ENCODE measurements at regions of chr3 and their contacts with region 1.

Region 1: GRCh38 chr3:153161138-153161713 is 800 bp upstream of the RAP2B start:
- DNase-seq: peak; percentile 66 to 95 (median 93)
- ATAC-seq: peak; percentile 85
- H3K4me3 ChIP-seq: peak overlapping the region; percentile 97
- H3K4me3 Mint-ChIP-seq: peak overlapping the region; percentile 95 to 100 (median 98)
- H3K27ac ChIP-seq: peak overlapping the region; percentile 81
- H3K27ac Mint-ChIP-seq: peak overlapping the region; percentile 89 to 98 (median 92)
- H3K4me1 ChIP-seq: peaks cover 7 to 22% of the 10 kb centered on the region in 2 donors
- H3K4me1 Mint-ChIP-seq: peaks cover 28 to 40% (median 34%) of the 10 kb centered on the region in 7 donors
- H3K27me3 ChIP-seq: no peaks in the 10 kb centered on the region
- H3K27me3 Mint-ChIP-seq: no peaks in the 10 kb centered on the region

Region 2: DNA sequence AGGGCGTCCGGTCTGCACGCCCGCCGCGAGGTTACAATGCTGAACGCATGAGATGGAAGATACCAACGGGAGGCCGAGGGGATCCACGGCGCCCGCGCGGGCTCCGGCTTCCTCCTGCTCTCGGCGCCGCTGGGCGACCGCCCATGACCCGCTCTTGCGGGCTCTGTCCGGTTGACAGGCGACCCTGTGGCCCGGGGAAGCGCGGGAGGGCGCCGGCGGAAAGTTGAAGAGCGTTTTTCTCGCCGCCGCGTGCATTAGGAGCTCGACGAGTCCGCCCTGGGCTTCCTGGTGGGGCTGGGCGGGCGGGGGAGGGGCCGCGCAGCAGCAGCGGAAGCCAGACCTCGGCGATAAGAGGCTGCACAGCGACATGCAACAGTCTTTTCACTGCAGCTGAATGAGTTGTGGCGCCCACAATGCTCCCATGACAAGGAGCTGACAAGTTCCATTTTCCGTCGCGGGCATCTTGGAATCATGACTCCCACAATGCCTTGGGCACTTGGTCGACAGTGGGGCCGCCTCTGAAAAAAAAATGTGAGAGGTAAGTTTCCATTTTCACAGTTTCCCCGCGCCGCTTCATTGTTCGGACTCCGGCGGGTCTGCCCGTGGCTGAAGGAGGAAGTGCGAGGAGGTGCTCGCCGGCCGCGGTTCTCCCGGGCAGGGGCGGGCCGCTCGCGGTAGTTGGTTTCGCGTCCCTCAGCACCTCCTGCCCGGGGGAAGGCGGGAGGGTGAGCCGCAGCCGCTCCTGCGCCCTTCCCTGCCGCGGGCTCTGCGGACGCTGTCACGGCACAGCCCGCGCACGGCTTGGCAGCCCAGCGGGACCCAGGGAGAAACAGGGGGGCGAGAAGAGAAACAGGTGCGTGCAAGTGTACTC is 892.4 kb before region 1 on chr3 and contains the start of gene MBNL1:
- CTCF ChIA-PET with region 1: no interaction called
- POLR2A ChIA-PET with region 1: no interaction called
- intact Hi-C with region 1: loop called in 1 of 2 experiments (anchors 10 kb)
- DNase-seq: peak; percentile 65 to 89 (median 87)
- ATAC-seq: peak; percentile 77
- H3K4me3 ChIP-seq: peak within 1 kb of the TSS; percentile 77
- H3K4me3 Mint-ChIP-seq: peak within 1 kb of the TSS; percentile 78 to 100 (median 94)
- H3K27ac ChIP-seq: peak within 1 kb of the TSS; percentile 99
- H3K27ac Mint-ChIP-seq: peak within 1 kb of the TSS; percentile 88 to 98 (median 95)
- H3K4me1 ChIP-seq: peaks cover 34 to 46% of the 10 kb centered on the region in 2 donors
- H3K4me1 Mint-ChIP-seq: peaks cover 46 to 69% (median 64%) of the 10 kb centered on the region in 7 donors
- H3K27me3 ChIP-seq: no peaks in the 10 kb centered on the region
- H3K27me3 Mint-ChIP-seq: no peaks in the 10 kb centered on the region
- total RNA-seq, gene MBNL1: 459 to 675 (median 508) TPM

Region 3: DNA sequence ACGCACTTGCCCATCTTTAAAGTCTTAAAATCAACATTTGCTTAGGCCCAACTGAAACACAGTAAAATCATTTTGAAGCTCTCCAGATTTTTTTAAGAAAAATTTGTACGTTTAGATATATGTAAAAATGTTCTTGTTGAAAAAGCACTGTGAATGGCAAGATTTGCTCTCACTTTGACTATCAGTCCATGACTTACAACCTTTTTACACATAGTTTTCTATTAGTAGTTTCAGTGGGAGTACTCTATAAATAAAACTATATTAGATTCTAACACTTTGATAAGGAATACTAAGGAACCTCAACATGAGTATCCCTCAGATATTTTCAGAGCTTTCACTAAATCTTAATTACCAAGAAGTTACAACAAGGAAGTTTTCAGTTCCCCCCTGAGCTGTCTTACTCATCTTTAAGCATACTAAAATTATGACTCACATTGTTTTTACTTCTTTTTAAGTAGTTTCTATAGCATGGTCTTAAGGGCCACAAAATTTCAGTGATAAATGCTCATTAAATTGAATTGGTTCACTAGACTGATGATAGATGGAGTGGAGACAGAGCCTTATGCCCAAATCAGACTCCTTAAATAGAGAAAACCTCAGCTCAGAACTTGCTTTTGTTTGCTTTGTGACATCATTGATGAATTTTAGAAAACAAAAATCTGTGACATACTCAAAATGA is 30.8 kb before region 1 on chr3:
- CTCF ChIA-PET with region 1: no interaction called
- POLR2A ChIA-PET with region 1: no interaction called
- intact Hi-C with region 1: no loop called
- DNase-seq: no peak
- ATAC-seq: peak; percentile 67
- H3K4me3 ChIP-seq: no peak overlapping the region
- H3K4me3 Mint-ChIP-seq: no peak overlapping the region
- H3K27ac ChIP-seq: no peak overlapping the region
- H3K27ac Mint-ChIP-seq: no peak overlapping the region
- H3K4me1 ChIP-seq: no peaks in the 10 kb centered on the region
- H3K4me1 Mint-ChIP-seq: peaks cover 0 to 7% (median 5%) of the 10 kb centered on the region in 7 donors
- H3K27me3 ChIP-seq: no peaks in the 10 kb centered on the region
- H3K27me3 Mint-ChIP-seq: peaks cover 0 to 8% (median 0%) of the 10 kb centered on the region in 5 donors

Region 4: DNA sequence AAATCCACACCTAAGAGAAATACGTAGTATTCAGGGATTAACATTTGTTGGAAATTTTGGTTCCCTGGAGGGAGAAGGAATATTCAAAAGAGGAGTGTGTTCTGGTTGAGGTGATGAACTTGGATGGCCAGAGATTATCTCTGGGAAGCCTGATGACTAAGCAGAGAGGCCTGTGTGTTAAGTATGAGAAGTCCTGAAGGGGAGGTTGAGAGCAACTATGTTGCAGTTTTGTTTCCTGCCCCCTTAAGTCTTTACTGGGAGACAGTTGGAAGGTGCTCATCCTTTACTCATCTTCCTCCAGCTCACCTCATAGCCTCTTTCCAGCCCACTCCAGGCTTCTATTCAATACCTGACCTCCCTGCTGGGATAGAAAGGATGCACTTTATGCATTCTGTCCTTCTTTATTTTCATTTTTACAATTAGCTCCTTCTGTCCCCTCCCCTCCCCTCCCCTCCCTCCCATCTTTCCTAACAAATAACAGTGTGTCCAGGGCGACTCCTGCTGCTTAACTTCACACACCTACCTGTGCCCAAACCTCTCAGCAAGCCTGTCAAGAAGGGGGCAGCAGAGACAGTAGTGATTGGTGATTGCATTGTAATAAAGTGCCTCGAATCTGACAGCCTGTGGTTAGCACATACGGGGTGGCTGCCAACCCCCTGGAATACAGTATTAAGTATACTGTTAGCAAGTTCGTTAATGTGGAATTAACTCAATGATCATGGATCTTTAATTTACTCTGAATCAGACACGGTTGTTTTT is 12.7 kb after region 1 on chr3:
- CTCF ChIA-PET with region 1: interaction called, 6 read pairs
- POLR2A ChIA-PET with region 1: interaction called, 19 read pairs
- intact Hi-C with region 1: no loop called
- DNase-seq: no peak
- ATAC-seq: peak; percentile 37
- H3K4me3 ChIP-seq: no peak overlapping the region
- H3K4me3 Mint-ChIP-seq: no peak overlapping the region
- H3K27ac ChIP-seq: no peak overlapping the region
- H3K27ac Mint-ChIP-seq: peak overlapping the region in 4 of 9 donors; percentile 10 to 62 (median 54)
- H3K4me1 ChIP-seq: no peaks in the 10 kb centered on the region
- H3K4me1 Mint-ChIP-seq: peaks cover 5 to 32% (median 17%) of the 10 kb centered on the region in 7 donors
- H3K27me3 ChIP-seq: no peaks in the 10 kb centered on the region
- H3K27me3 Mint-ChIP-seq: no peaks in the 10 kb centered on the region

Region 5: DNA sequence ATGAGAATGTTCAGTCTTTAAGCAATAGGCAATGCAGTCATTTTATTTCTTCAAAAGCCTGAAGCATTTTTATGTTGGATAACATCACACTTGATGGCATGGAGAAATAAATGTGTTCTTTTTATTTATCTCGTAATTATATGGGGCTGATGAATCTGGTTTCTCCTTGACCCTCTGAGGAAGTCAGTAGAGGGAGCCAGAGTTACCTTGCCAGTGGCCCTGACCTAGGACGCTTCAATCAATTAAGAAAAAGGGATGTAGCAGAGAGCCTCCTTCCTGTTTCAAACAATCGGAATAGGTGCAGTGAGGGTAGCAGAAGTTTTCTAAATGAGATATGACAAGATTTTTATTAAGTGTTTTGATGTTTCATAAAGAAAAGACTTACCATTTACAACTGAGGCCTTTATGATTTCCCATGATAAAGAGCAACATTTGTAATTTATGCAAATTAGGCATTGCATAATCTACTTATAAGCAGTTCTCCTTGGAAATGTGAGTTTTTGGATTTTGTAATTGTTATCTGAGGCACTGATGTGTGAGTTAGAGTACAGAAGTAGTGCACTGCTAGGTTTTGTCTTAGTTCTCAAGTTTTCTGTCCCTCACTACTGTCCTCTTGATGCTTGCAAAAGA is 129.9 kb after region 1 on chr3:
- CTCF ChIA-PET with region 1: interaction called, 31 read pairs
- POLR2A ChIA-PET with region 1: interaction called, 38 read pairs
- intact Hi-C with region 1: loop called (anchors 1 kb)
- DNase-seq: peak in 1 of 9 donors; percentile 14
- ATAC-seq: peak; percentile 66
- H3K4me3 ChIP-seq: no peak overlapping the region
- H3K4me3 Mint-ChIP-seq: no peak overlapping the region
- H3K27ac ChIP-seq: no peak overlapping the region
- H3K27ac Mint-ChIP-seq: peak overlapping the region in 4 of 9 donors; percentile 19 to 59 (median 41)
- H3K4me1 ChIP-seq: peaks cover 9 to 19% of the 10 kb centered on the region in 2 donors
- H3K4me1 Mint-ChIP-seq: peaks cover 26 to 48% (median 46%) of the 10 kb centered on the region in 7 donors
- H3K27me3 ChIP-seq: no peaks in the 10 kb centered on the region
- H3K27me3 Mint-ChIP-seq: no peaks in the 10 kb centered on the region

Region 6: GRCh38 chr3:153513236-153513635 is 352.0 kb after region 1 on chr3:
- CTCF ChIA-PET with region 1: no interaction called
- POLR2A ChIA-PET with region 1: no interaction called
- intact Hi-C with region 1: loop called in 1 of 2 experiments (anchors 5 kb)
- DNase-seq: peak in 5 of 9 donors; percentile 19 to 25 (median 21)
- ATAC-seq: peak; percentile 38
- H3K4me3 ChIP-seq: no peak overlapping the region
- H3K4me3 Mint-ChIP-seq: no peak overlapping the region
- H3K27ac ChIP-seq: no peak overlapping the region
- H3K27ac Mint-ChIP-seq: no peak overlapping the region
- H3K4me1 ChIP-seq: no peaks in the 10 kb centered on the region
- H3K4me1 Mint-ChIP-seq: no peaks in the 10 kb centered on the region
- H3K27me3 ChIP-seq: no peaks in the 10 kb centered on the region
- H3K27me3 Mint-ChIP-seq: no peaks in the 10 kb centered on the region

Region 7: DNA sequence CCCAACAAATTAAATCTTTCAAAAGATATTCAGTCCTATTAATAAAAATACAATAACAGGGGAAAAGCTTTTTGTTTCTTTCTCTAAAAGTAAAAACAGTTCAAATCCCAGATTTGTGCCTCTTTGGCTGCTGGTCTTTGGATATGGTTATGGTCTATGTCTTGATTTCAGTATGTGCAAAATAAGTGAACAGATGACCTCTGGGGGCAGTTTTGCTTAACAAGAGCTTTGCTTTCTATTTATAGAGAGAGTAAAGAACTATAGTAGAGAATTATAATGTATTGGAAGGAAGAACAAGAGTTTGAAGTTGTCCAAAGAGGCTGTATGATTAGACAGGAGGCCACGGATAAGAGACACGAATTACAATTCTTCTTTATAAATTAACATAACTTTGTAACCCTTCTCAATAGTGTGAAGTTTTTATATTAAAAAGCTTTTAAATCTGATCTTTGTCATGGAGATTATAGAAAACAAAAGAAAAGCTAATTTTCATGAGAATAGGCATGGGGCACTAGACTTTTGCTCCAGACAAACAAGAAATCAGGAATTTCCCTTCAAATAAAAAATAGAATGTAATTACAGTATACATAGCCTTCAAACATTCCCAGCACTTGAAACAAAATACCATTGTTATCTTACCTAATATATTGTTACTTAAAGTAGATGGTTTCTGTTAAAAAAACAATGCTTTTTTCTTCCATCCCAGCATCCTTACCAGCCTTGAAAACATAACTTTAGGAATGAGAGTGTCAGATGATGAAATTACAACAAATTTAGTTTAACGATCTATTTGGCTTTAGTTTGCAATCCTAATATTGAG is 527.3 kb after region 1 on chr3:
- CTCF ChIA-PET with region 1: no interaction called
- POLR2A ChIA-PET with region 1: no interaction called
- intact Hi-C with region 1: loop called in 1 of 2 experiments (anchors 1 kb)
- DNase-seq: no peak
- ATAC-seq: no peak
- H3K4me3 ChIP-seq: no peak overlapping the region
- H3K4me3 Mint-ChIP-seq: no peak overlapping the region
- H3K27ac ChIP-seq: no peak overlapping the region
- H3K27ac Mint-ChIP-seq: no peak overlapping the region
- H3K4me1 ChIP-seq: no peaks in the 10 kb centered on the region
- H3K4me1 Mint-ChIP-seq: peaks cover 0 to 6% (median 0%) of the 10 kb centered on the region in 7 donors
- H3K27me3 ChIP-seq: no peaks in the 10 kb centered on the region
- H3K27me3 Mint-ChIP-seq: no peaks in the 10 kb centered on the region

Region 8: GRCh38 chr3:154120961-154121700 is 959.9 kb after region 1 on chr3 and contains the start of gene ARHGEF26:
- CTCF ChIA-PET with region 1: no interaction called
- POLR2A ChIA-PET with region 1: interaction called, 3 read pairs
- intact Hi-C with region 1: loop called in 1 of 2 experiments (anchors 1 kb)
- DNase-seq: peak; percentile 7 to 73 (median 59)
- ATAC-seq: peak; percentile 89
- H3K4me3 ChIP-seq: peak within 1 kb of the TSS; percentile 57
- H3K4me3 Mint-ChIP-seq: peak within 1 kb of the TSS; percentile 68 to 91 (median 82)
- H3K27ac ChIP-seq: no peak within 1 kb of the TSS
- H3K27ac Mint-ChIP-seq: peak within 1 kb of the TSS in 1 of 9 donors; percentile 28
- H3K4me1 ChIP-seq: no peaks in the 10 kb centered on the region
- H3K4me1 Mint-ChIP-seq: peaks cover 11 to 24% (median 18%) of the 10 kb centered on the region in 7 donors
- H3K27me3 ChIP-seq: peaks cover 0 to 6% of the 10 kb centered on the region in 2 donors
- H3K27me3 Mint-ChIP-seq: peaks cover 60 to 82% (median 69%) of the 10 kb centered on the region in 5 donors
- total RNA-seq, gene ARHGEF26: 0.08 to 0.13 TPM in 2 of 5 experiments, not detected in the others

Measured in naive thymus-derived CD4-positive, alpha-beta T cell (primary cell).